ENCODE measurements at regions of chr7 and their contacts with region 1.

Region 1: DNA sequence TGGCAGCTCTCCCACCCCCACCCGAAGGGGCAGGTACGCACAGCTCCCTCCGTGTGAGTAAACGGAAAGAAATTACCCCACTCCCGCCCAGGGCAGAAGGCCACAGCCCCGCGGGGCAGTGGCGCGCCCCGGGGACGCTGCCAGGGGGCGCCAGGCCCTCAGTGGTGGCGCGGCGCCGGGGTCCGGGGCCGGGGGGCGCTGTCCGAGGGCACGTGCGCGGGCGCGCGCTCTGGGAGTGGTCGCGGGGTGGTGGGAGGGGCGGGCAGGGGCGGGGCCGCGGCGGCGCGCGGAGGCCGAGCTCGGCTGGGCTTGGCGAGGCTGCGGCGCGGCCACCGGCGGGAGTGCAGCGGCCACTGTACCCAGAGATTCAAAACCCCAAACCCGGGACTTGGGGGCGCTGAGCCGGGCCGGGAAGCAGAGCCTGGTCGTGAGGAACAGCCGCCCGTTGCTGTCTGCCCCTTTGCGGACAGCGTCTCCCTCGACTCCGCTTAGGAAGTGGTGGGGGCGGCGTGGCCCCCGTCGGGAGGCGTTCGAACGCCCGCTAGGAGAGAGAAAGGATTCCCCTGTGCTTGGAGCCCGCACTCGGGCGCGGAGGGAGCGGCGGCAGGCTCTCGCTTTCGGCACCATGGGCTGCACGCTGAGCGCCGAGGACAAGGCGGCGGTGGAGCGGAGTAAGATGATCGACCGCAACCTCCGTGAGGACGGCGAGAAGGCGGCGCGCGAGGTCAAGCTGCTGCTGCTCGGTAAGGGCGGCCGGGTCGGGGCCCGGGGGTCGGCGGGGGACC is at the start of gene GNAI1:
- DNase-seq: peak; percentile 81
- ATAC-seq: peak; percentile 68
- H3K4me3 ChIP-seq: peak within 1 kb of the TSS; percentile 99
- H3K27ac ChIP-seq: peak within 1 kb of the TSS; percentile 48
- H3K4me1 ChIP-seq: peaks cover 23% of the 10 kb centered on the region
- H3K27me3 ChIP-seq: no peaks in the 10 kb centered on the region
- CTCF ChIP-seq: peak; percentile 43
- total RNA-seq, gene GNAI1: 16.9 and 19.6 TPM in 2 replicates

Region 2: GRCh38 chr7:80008039-80008438 is 126.7 kb before region 1 on chr7:
- CTCF ChIA-PET with region 1: no interaction called
- POLR2A ChIA-PET with region 1: no interaction called
- intact Hi-C with region 1: no loop called
- DNase-seq: no peak
- ATAC-seq: no peak
- H3K4me3 ChIP-seq: no peak overlapping the region
- H3K27ac ChIP-seq: no peak overlapping the region
- H3K4me1 ChIP-seq: no peaks in the 10 kb centered on the region
- H3K27me3 ChIP-seq: no peaks in the 10 kb centered on the region
- CTCF ChIP-seq: no peak

Region 3: GRCh38 chr7:80095545-80095944 is 39.2 kb before region 1 on chr7:
- CTCF ChIA-PET with region 1: interaction called, 6 read pairs
- POLR2A ChIA-PET with region 1: no interaction called
- intact Hi-C with region 1: loop called (anchors 2 kb)
- DNase-seq: peak; percentile 45
- ATAC-seq: peak; percentile 56
- H3K4me3 ChIP-seq: no peak overlapping the region
- H3K27ac ChIP-seq: no peak overlapping the region
- H3K4me1 ChIP-seq: no peaks in the 10 kb centered on the region
- H3K27me3 ChIP-seq: no peaks in the 10 kb centered on the region
- CTCF ChIP-seq: peak; percentile 64

Region 4: GRCh38 chr7:80218723-80219122 is 84.0 kb after region 1 on chr7:
- CTCF ChIA-PET with region 1: no interaction called
- POLR2A ChIA-PET with region 1: interaction called, 3 read pairs
- intact Hi-C with region 1: loop called (anchors 1 kb)
- DNase-seq: peak; percentile 91
- ATAC-seq: peak; percentile 93
- H3K4me3 ChIP-seq: no peak overlapping the region
- H3K27ac ChIP-seq: peak overlapping the region; percentile 55
- H3K4me1 ChIP-seq: peaks cover 15% of the 10 kb centered on the region
- H3K27me3 ChIP-seq: no peaks in the 10 kb centered on the region
- CTCF ChIP-seq: no peak

Region 5: GRCh38 chr7:80362010-80362618 is 227.4 kb after region 1 on chr7:
- CTCF ChIA-PET with region 1: interaction called, 4 read pairs
- POLR2A ChIA-PET with region 1: interaction called, 3 read pairs
- intact Hi-C with region 1: loop called (anchors 5 kb)
- DNase-seq: peak; percentile 65
- ATAC-seq: peak; percentile 77
- H3K4me3 ChIP-seq: peak overlapping the region; percentile 36; the same call in 1 of the 2 replicates
- H3K27ac ChIP-seq: peak overlapping the region; percentile 95
- H3K4me1 ChIP-seq: peaks cover 29% of the 10 kb centered on the region
- H3K27me3 ChIP-seq: no peaks in the 10 kb centered on the region
- CTCF ChIP-seq: no peak

Region 6: DNA sequence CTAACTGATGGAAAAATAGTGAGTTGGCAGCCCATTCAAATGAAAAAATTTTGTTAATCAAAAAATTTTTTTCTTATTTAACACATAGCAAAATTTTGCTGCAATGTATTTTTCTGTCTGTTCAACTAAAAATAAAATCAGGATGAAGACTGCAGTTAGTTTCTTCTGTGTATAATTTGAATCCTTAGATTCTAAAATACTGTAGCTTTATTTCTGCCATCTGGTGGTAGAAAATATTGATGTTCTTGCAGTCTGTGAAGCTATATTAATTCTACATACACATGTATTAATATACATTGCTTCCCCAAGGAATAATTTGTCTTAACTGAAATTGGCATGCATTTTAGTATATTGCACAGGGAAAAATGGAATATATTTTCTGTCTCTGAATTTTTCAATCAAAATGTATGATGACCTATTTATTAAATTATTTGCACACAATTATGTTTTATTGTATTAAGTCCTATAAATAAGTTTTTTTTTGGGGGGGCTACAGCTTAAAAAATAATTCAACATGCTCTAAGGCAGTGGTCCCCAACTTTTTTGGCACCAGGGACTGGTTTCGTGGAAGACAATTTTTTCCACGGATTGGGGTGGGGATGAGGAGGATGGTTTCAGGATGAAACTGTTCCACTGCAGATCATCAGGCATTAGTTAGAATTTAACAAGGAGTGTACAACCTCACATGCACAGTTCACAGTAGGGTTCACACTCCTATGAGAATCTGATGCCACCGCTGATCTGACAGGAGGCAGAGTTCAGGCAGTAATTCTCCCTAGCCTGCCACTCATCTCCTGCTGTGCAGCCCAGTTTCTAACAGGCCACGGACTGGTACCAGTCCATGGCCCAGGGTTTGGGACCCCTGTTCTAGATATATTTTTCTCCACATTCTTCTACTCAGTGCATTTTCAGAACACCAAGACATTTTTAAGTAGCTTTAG is 257.8 kb after region 1 on chr7:
- CTCF ChIA-PET with region 1: interaction called, 18 read pairs
- POLR2A ChIA-PET with region 1: interaction called, 3 read pairs
- intact Hi-C with region 1: loop called (anchors 1 kb)
- DNase-seq: peak; percentile 77
- ATAC-seq: peak; percentile 56
- H3K4me3 ChIP-seq: no peak overlapping the region
- H3K27ac ChIP-seq: no peak overlapping the region
- H3K4me1 ChIP-seq: no peaks in the 10 kb centered on the region
- H3K27me3 ChIP-seq: no peaks in the 10 kb centered on the region
- CTCF ChIP-seq: peak; percentile 68

Region 7: GRCh38 chr7:80659120-80660055 is 524.7 kb after region 1 on chr7:
- CTCF ChIA-PET with region 1: interaction called, 3 read pairs
- POLR2A ChIA-PET with region 1: no interaction called
- intact Hi-C with region 1: loop called (anchors 10 kb)
- DNase-seq: peak; percentile 62
- ATAC-seq: peak; percentile 37; the same call in 1 of the 2 replicates
- H3K4me3 ChIP-seq: no peak overlapping the region
- H3K27ac ChIP-seq: no peak overlapping the region
- H3K4me1 ChIP-seq: 0 out of 2 replicates have a peak, but pooled peaks cover 3% of the 10 kb centered on the region
- H3K27me3 ChIP-seq: no peaks in the 10 kb centered on the region
- CTCF ChIP-seq: peak; percentile 80

Measured in PC-3 (cell line).